Activated CD4-positive, alpha-beta memory T cell treated with anti-CD3 and anti-CD28 coated beads, Interleukin-2, amount 10 ng/mL, durations not matched to agents 7 days and 5 days (primary cell): ENCODE measurements at regions of chr7 and their contacts with region 1.

Region 1: GRCh38 chr7:143008007-143008901 is 18.7 kb downstream of the OR9A2 start:
- DNase-seq: peak; percentile 81
- H3K4me3 Mint-ChIP-seq: no peak overlapping the region
- H3K27ac Mint-ChIP-seq: no peak overlapping the region
- H3K4me1 Mint-ChIP-seq: peaks cover 4% of the 10 kb centered on the region
- H3K27me3 Mint-ChIP-seq: peaks cover 19% of the 10 kb centered on the region

Region 2: GRCh38 chr7:142301923-142302550 is 706.2 kb before region 1 on chr7:
- CTCF ChIA-PET with region 1: interaction called, 17 read pairs
- POLR2A ChIA-PET with region 1: no interaction called
- DNase-seq: no peak
- H3K4me3 Mint-ChIP-seq: no peak overlapping the region
- H3K27ac Mint-ChIP-seq: no peak overlapping the region
- H3K4me1 Mint-ChIP-seq: peaks cover 6% of the 10 kb centered on the region
- H3K27me3 Mint-ChIP-seq: peaks cover 16% of the 10 kb centered on the region

Region 3: GRCh38 chr7:142603870-142604448 is 404.3 kb before region 1 on chr7:
- CTCF ChIA-PET with region 1: interaction called, 19 read pairs
- POLR2A ChIA-PET with region 1: no interaction called
- DNase-seq: peak; percentile 51
- H3K4me3 Mint-ChIP-seq: no peak overlapping the region
- H3K27ac Mint-ChIP-seq: no peak overlapping the region
- H3K4me1 Mint-ChIP-seq: peaks cover 10% of the 10 kb centered on the region
- H3K27me3 Mint-ChIP-seq: peaks cover 11% of the 10 kb centered on the region

Region 4: GRCh38 chr7:142632291-142633134 is 375.7 kb before region 1 on chr7:
- CTCF ChIA-PET with region 1: interaction called, 13 read pairs
- POLR2A ChIA-PET with region 1: no interaction called
- DNase-seq: peak; percentile 60
- H3K4me3 Mint-ChIP-seq: no peak overlapping the region
- H3K27ac Mint-ChIP-seq: peak overlapping the region; percentile 29
- H3K4me1 Mint-ChIP-seq: peaks cover 13% of the 10 kb centered on the region
- H3K27me3 Mint-ChIP-seq: peaks cover 15% of the 10 kb centered on the region

Region 5: GRCh38 chr7:142873281-142873787 is 134.9 kb before region 1 on chr7:
- CTCF ChIA-PET with region 1: interaction called, 17 read pairs
- POLR2A ChIA-PET with region 1: no interaction called
- DNase-seq: peak; percentile 34
- H3K4me3 Mint-ChIP-seq: no peak overlapping the region
- H3K27ac Mint-ChIP-seq: no peak overlapping the region
- H3K4me1 Mint-ChIP-seq: no peaks in the 10 kb centered on the region
- H3K27me3 Mint-ChIP-seq: no peaks in the 10 kb centered on the region

Region 6: GRCh38 chr7:142880876-142881505 is 127.3 kb before region 1 on chr7:
- CTCF ChIA-PET with region 1: interaction called, 17 read pairs
- POLR2A ChIA-PET with region 1: no interaction called
- DNase-seq: peak; percentile 50
- H3K4me3 Mint-ChIP-seq: no peak overlapping the region
- H3K27ac Mint-ChIP-seq: no peak overlapping the region
- H3K4me1 Mint-ChIP-seq: no peaks in the 10 kb centered on the region
- H3K27me3 Mint-ChIP-seq: peaks cover 18% of the 10 kb centered on the region

Region 7: DNA sequence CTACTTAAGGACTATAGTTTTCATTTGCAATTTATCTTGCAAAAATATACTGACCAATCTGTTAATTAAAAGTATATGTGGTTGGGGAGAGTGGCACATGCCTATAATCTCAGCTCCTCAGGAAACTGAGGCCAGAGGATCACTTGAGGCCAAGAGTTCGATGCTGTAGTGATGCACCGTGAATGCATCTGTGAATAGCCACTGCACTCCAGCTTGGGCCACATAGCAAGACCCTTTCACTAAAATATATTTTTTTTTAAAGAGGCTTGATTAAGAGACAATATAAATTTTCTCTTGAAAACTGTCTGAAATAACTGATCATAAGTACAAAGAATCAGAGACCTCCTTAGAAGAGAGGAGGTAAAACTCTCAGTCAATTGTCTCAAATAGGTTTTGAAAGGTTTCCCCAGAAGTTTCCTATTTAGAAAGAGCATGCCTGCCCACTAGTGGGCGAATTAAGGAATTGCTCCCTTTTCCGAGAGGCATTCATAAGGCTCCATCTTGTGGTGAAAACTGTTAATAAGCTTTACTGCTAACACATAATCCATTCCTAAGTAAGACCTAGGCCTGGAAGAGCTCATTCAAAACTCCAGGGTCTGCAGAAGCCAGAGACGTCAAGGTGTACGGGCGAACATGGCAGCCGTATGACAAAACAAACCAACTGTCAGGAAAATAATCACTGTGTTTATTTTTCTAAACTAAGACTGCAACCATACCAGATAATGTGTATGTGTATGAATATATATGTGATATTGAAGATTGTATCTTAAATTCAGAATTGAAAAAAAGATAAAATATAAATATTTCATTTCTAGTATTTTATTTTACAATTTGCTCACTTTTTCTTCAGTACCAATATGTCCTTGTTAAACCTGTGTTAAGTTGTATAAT is 206.8 kb after region 1 on chr7:
- CTCF ChIA-PET with region 1: interaction called, 235 read pairs
- POLR2A ChIA-PET with region 1: interaction called, 7 read pairs
- DNase-seq: peak; percentile 70
- H3K4me3 Mint-ChIP-seq: no peak overlapping the region
- H3K27ac Mint-ChIP-seq: no peak overlapping the region
- H3K4me1 Mint-ChIP-seq: no peaks in the 10 kb centered on the region
- H3K27me3 Mint-ChIP-seq: peaks cover 9% of the 10 kb centered on the region